Left colon (tissue), 2 donors: ENCODE measurements at regions of chrX and their contacts with region 1.

Region 1: DNA sequence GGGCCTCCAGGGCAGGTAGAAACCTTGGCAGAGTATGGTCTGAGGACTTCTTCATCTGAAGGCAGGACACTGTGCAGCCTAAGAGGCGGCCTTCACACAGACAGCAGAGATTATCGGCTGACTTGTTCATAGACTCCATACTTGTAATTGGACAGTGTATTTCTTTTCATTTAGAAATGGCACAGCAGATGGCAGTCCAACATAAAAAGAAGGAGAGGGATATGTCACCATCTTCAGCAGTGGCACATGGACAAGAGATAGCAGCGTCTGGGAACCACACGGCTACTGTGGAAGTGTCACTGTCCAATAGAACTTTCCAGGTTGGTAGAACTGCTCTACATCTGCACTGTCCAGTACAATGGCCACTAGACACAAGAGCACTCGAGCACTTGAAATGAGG is 21.7 kb upstream of the GEMIN8 start:
- DNase-seq: peak in 1 of 2 donors; percentile 13
- ATAC-seq: peak; percentile 88

Region 2: GRCh38 chrX:14125462-14125861 is 74.0 kb after region 1 on chrX:
- intact Hi-C with region 1: no loop called
- DNase-seq: no peak
- ATAC-seq: no peak

Region 3: DNA sequence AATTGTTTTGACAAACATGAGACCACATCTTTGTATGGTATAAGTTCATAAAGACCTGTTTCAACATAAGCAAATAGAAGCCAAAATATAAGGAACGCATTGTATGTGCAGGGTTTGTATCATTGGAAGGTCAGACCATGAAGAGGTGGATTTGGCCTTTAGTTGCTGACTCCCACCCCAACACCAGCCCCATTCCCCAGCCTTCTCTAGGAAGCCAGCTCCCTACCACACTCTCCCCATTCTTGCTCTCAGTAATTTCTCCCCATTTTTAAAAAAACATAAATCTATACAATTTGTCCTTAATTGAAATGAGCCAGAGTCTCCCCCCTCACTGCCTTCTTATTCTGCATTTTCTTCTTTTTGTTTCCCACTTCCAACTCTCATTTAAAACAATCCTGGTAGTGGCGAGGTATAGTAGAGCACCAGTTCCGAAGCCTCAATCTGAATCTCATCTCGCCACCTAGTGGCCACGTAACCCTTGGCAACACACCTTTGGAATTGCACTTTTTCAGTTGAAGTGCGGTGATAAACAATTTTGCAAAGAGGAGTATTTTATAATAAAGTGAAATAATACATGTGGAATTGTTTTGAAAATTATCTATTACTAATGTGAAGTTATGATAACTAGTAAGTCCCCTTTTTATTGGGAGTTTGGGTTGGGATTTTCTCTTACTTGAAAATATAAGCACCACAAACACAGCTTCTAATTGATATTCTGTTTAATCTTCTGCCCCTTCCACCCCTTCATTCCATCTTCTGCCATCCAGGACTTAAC is 1091.8 kb after region 1 on chrX:
- intact Hi-C with region 1: loop called in 1 of 2 experiments (anchors 10 kb)
- DNase-seq: peak; percentile 34 to 76
- ATAC-seq: peak; percentile 90